ENCODE measurements at regions of chr14 and their contacts with region 1.

Region 1: GRCh38 chr14:21933681-21934080 is 260.1 kb upstream of the OR4E1 start:
- DNase-seq: peak; percentile 53
- ATAC-seq: peak; percentile 48; the same call in 1 of the 2 replicates
- H3K4me3 ChIP-seq: no peak overlapping the region
- H3K27ac ChIP-seq: no peak overlapping the region
- H3K4me1 ChIP-seq: no peaks in the 10 kb centered on the region
- H3K27me3 ChIP-seq: peaks cover 41% of the 10 kb centered on the region
- CTCF ChIP-seq: peak; percentile 61

Region 2: DNA sequence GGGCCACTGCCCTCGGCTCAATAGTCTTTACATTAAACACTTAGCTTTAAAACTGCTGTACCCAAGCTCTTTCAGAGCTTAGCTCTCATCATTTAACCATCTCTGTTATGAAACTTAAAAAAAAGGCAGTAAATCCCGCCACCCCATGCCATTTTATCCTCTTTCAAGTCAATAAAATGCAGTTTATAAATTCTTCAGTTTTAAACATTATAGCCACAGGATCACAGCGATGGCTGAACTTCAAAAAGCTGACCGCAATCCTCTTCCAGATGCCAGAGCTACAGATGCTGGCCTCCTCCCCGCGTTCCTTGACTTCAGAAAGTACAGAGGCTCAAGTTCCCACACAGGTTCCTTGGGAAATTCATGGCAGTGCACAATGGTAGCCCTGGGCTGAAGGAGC is 358.0 kb before region 1 on chr14:
- CTCF ChIA-PET with region 1: no interaction called
- POLR2A ChIA-PET with region 1: no interaction called
- intact Hi-C with region 1: no loop called
- DNase-seq: no peak
- ATAC-seq: no peak
- H3K4me3 ChIP-seq: no peak overlapping the region
- H3K27ac ChIP-seq: no peak overlapping the region
- H3K4me1 ChIP-seq: no peaks in the 10 kb centered on the region
- H3K27me3 ChIP-seq: peaks cover 33% of the 10 kb centered on the region
- CTCF ChIP-seq: no peak

Region 3: DNA sequence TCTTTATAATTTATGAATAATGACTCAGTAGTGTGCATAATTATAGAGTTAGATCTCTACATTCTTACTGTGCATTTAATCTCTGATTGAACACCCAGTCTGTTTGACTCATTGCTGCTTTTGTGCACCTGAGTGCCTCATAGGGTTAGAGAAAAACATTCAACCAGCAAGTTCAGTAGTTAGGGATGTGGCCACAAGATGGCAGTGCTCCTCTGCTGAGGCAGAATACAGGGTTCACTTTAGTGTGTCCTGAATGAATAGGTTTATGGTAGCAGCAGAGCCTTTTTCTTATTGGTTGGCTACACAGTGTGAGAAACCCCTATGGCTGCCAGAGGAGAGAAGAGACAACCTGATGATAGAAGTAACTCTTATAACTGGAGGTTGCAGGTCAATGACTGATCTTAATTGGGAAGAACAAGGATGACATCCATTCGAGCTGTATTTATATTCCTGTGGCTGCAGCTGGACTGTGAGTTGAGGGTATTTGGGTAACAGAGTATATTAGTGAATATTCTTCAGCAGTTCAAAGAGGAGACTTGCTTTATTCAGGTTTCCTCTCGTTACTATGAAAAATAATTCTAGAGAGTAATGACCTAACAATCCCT is 65.1 kb before region 1 on chr14:
- CTCF ChIA-PET with region 1: no interaction called
- POLR2A ChIA-PET with region 1: no interaction called
- intact Hi-C with region 1: loop called (anchors 1 kb)
- DNase-seq: peak; percentile 78
- ATAC-seq: peak; percentile 88
- H3K4me3 ChIP-seq: no peak overlapping the region
- H3K27ac ChIP-seq: no peak overlapping the region
- H3K4me1 ChIP-seq: no peaks in the 10 kb centered on the region
- H3K27me3 ChIP-seq: peaks cover 16% of the 10 kb centered on the region
- CTCF ChIP-seq: peak; percentile 82

Region 4: DNA sequence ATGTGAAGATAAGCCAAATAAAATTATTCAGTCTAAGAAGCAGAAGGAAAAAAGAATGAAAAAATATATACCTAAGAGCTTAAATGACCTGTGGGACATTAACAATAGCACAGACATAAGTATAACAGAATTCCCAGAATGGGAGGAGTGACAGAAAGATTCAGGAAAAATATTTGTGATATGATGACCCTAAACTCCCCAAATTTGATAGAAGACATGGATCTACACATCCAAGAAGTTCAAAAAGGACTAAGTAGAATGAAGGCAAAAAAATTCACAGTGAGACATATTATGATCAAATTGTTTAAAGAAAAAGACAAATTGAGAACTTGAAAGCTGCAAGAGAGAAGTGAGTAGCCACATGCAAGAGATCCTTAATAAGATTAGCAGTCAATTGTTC is 48.7 kb before region 1 on chr14:
- CTCF ChIA-PET with region 1: no interaction called
- POLR2A ChIA-PET with region 1: no interaction called
- intact Hi-C with region 1: loop called (anchors 5 kb)
- DNase-seq: no peak
- ATAC-seq: no peak
- H3K4me3 ChIP-seq: no peak overlapping the region
- H3K27ac ChIP-seq: no peak overlapping the region
- H3K4me1 ChIP-seq: peaks cover 4% of the 10 kb centered on the region
- H3K27me3 ChIP-seq: peaks cover 14% of the 10 kb centered on the region
- CTCF ChIP-seq: no peak

Region 5: DNA sequence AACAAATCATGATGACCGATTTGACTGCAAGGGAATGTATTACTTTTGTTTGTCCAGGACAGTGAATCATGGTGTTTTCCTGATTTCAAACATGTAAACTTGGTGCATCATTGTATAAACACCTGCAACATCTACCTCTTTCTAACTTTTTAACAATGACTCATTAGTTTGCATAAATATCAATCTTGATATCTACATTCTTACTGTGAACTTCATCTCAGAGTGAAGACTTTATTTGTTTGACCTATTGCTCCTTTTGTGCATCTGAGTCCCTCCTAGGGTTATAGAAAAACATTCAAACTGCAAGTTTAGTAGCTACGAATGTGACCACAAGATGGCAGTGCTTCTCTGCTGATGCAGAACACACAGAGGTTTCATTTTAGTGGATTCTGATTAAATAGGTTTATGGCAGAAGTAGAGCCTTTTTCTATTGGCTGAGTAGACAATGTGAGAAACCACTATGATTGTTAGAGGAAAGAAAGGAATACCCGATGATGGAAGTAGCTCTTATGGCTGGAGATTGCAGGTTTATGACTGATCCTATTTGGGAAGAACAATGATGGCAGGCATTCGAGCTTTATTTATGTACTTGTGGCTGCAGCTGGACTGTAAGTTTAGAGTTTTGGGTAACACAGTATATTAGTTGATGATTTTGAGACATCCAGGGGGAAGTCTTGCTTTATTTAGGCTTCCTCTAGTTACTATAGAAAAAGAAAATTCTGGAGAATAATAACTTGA is 15.8 kb before region 1 on chr14:
- CTCF ChIA-PET with region 1: interaction called, 3 read pairs
- POLR2A ChIA-PET with region 1: no interaction called
- intact Hi-C with region 1: loop called (anchors 1 kb)
- DNase-seq: peak; percentile 95
- ATAC-seq: peak; percentile 72
- H3K4me3 ChIP-seq: peak overlapping the region; percentile 48; the same call in 1 of the 2 replicates
- H3K27ac ChIP-seq: peak overlapping the region; percentile 79; the same call in 1 of the 2 replicates
- H3K4me1 ChIP-seq: peaks cover 46% of the 10 kb centered on the region
- H3K27me3 ChIP-seq: peaks cover 3% of the 10 kb centered on the region
- CTCF ChIP-seq: peak; percentile 96